Heart left ventricle (tissue), 16 donors: ENCODE measurements at regions of chr2 and their contacts with region 1.

Region 1: GRCh38 chr2:106030287-106031268 is 163.5 kb downstream of the UXS1 start:
- DNase-seq: peak; percentile 53 to 77 (median 63)
- ATAC-seq: peak; percentile 78 to 90 (median 88)
- H3K4me3 ChIP-seq: no peak overlapping the region
- H3K27ac ChIP-seq: peak overlapping the region; percentile 62 to 93 (median 81)
- H3K4me1 ChIP-seq: peaks cover 5 to 53% (median 30%) of the 10 kb centered on the region in 12 donors
- H3K27me3 ChIP-seq: no peaks in the 10 kb centered on the region
- CTCF ChIP-seq: no peak
- POLR2A ChIP-seq: no peak

Region 2: DNA sequence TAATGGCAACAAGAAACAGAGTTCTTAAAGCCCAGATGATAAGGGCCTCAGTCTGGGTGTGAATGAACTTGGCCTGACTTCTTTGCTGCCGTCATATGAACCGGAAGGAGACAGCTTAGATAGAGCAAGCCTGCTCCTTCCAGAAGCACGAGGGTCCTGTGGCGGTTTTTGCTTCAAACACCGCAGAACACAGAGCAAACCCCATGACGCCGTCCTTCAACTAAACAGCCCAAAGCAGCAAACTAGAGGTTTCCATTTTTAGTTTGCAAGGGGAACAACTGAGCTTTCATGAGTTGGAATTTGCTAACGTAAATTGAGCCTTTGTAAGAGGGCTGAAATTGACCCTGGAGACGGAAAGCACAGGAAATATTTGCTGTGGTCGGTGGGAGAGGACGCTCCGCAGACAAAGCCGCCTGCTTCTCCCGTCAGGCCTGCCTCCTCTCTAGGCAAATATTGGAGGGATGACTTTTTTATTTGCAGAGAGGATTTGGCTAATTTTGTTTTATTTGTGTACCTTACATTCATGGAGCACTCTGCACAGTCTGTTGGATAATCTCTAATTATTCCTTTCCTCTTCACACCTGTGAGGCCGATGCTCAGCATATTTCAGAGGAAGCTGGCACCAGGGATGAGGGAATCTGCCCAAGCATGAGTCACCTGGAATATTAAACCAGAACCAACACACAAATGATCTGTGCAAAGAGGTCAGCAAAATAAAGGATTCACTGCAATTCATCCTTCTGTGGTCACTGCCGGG is 419.8 kb before region 1 on chr2:
- intact Hi-C with region 1: no loop called
- DNase-seq: no peak
- ATAC-seq: no peak
- H3K4me3 ChIP-seq: no peak overlapping the region
- H3K27ac ChIP-seq: no peak overlapping the region
- H3K4me1 ChIP-seq: peaks cover 0 to 10% (median 2%) of the 10 kb centered on the region in 12 donors
- H3K27me3 ChIP-seq: no peaks in the 10 kb centered on the region
- CTCF ChIP-seq: no peak
- POLR2A ChIP-seq: no peak

Region 3: DNA sequence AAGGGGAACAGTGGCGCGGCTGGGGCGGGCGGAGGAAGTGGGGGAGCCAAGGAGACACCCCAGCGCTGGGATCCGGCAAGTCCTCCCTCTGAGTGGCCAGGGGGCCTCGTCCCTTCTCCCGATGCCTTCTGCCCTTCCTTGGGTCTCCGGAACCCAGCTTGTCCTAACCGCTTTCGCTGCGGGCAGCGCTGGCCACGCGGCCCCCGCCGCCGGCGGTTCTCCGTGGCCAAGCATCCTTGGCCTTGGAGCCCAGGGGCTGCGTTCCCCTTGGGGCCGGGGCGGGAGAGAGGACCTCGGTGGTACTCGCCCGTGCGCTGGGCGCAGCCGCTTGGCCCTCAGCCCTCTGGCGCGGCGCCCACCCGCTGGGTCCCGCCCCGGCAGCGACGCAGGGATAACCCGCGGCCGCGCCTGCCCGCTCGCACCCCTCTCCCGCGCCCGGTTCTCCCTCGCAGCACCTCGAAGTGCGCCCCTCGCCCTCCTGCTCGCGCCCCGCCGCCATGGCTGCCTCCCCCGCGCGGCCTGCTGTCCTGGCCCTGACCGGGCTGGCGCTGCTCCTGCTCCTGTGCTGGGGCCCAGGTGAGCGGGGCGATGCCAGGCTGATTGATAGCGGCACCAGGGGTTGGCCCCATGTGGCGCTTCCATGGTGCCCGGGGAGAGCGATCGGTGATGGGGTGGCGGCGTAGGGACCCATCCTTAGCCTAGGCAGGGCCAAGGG is 34.8 kb after region 1 on chr2:
- intact Hi-C with region 1: loop called in 1 of 10 experiments (anchors 5 kb)
- DNase-seq: peak; percentile 27 to 73 (median 46)
- ATAC-seq: peak in 3 of 4 donors; percentile 57 to 81 (median 70)
- H3K4me3 ChIP-seq: peak overlapping the region; percentile 44 to 71 (median 56)
- H3K27ac ChIP-seq: peak overlapping the region in 4 of 12 donors; percentile 30 to 46 (median 38)
- H3K4me1 ChIP-seq: peaks cover 0 to 19% (median 7%) of the 10 kb centered on the region in 12 donors
- H3K27me3 ChIP-seq: peaks cover 0 to 21% (median 10%) of the 10 kb centered on the region in 9 donors
- CTCF ChIP-seq: no peak
- POLR2A ChIP-seq: no peak

Region 4: GRCh38 chr2:106076941-106077340 is 46.4 kb after region 1 on chr2:
- intact Hi-C with region 1: no loop called
- DNase-seq: no peak
- ATAC-seq: no peak
- H3K4me3 ChIP-seq: no peak overlapping the region
- H3K27ac ChIP-seq: no peak overlapping the region
- H3K4me1 ChIP-seq: peaks cover 0 to 12% (median 0%) of the 10 kb centered on the region in 12 donors
- H3K27me3 ChIP-seq: no peaks in the 10 kb centered on the region
- CTCF ChIP-seq: no peak
- POLR2A ChIP-seq: no peak